ENCODE measurements at regions of chr2 and their contacts with region 1.

Region 1: GRCh38 chr2:223270548-223270947 is 218.6 kb downstream of the KCNE4 start:
- DNase-seq: no peak

Region 2: DNA sequence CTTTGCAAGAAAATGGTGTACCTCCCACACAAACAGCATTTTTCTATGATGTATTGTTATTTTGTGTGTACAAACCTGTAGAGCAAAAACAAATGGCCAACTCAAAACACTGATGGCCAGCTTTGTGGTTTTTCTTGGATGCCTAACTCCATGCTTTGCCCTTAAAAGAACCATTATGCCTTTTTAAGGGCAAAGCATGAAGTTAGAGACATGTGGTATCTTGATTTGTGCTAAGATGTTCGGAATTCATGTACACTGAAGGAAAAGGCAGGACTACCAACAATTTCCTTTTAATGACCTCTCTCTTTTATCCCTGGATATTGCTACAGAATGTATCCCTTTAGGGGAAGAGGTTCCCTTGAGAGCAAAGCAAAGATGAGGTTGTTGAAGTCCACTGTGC is 58.0 kb after region 1 on chr2:
- intact Hi-C with region 1: no loop called
- DNase-seq: no peak

Region 3: DNA sequence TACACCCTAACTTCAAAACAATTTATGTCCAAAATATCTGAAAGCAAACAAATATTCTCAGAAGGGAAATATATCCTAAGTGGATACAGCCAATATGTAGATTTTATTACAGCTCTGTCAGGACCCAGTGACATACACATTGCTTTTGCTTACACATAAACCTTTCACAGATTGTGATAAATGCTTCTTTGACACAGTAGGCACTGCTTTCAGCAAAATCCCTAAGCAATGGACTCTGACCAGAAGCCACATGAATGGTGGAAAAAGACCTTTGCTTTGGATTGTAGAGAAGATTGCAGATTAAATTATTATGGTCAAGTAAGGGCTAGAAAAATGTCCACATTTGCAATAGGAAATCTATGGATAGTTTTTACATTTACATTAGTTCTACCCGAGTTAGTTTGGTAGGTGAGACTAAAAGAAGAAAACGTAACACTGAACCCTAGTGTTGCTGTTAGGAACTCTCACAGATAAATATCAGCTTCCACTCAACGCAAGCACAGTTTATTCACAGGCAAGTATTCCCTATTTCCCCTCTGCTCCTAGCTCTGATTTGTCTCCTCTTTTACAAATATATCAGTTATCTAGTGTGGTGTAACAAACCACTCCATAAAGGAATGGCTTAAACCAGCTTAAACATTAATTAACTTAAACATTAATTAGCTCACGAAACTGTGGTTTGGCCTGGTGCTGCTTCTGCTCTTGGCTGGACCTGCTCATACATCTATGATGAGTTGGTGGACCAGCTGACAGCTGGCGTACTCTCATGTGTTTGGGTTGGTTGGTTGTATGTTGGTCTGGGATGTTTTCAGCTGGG is 792.1 kb after region 1 on chr2:
- intact Hi-C with region 1: loop called in 1 of 2 experiments (anchors 10 kb)
- DNase-seq: no peak

Measured in posterior vena cava (tissue), 2 donors.